Activated CD4-positive, alpha-beta T cell treated with anti-CD3 and anti-CD28 coated beads for 36 hours (primary cell): ENCODE measurements at regions of chr9 and their contacts with region 1.

Region 1: GRCh38 chr9:115013998-115014397 is 83.6 kb upstream of the TNFSF8 start:
- DNase-seq: peak; percentile 89
- ATAC-seq: peak; percentile 89
- H3K4me3 Mint-ChIP-seq: no peak overlapping the region
- H3K27ac Mint-ChIP-seq: peak overlapping the region; percentile 58
- H3K4me1 Mint-ChIP-seq: peaks cover 46% of the 10 kb centered on the region
- H3K27me3 Mint-ChIP-seq: no peaks in the 10 kb centered on the region

Region 2: DNA sequence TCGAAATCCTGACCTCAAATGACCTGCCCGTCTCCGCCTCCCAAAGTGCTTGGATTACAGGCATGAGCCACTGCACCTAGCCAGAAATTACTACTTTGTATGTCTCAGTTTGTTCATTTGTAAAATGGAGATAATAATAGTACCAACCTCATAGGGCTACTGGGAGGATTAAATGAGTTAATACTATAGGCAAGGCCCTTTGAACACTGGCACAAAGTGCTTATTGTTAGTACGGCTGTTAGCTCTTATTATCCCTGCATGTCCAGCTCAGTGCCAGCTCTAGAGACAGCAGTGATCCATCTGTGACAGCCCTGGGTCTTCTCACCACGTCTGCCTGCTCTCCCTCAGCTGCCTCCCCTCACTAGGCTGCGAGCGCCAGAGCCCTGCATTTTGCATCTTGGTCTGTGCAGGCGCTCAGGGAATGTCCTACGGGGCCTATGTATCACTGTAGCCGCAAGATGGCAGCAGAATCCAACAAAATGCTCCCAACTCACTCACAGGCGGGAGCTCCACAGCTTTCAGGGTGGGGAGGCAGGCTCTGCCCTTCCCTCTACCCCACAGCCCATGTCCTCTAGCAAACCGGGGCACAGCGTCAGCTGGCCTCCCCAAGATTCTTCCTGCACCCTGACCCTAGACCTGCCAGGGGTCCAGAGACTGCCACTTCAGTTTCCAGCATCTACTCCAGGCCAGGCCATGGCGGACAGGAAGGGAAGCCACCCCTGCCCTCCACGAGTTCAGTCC is 608.5 kb before region 1 on chr9:
- CTCF ChIA-PET with region 1: interaction called, 3 read pairs
- POLR2A ChIA-PET with region 1: no interaction called
- intact Hi-C with region 1: loop called (anchors 1 to 5 kb)
- DNase-seq: peak; percentile 88
- ATAC-seq: peak; percentile 100
- H3K4me3 Mint-ChIP-seq: no peak overlapping the region
- H3K27ac Mint-ChIP-seq: no peak overlapping the region
- H3K4me1 Mint-ChIP-seq: peaks cover 6% of the 10 kb centered on the region
- H3K27me3 Mint-ChIP-seq: no peaks in the 10 kb centered on the region

Region 3: GRCh38 chr9:114662081-114662989 is 351.7 kb before region 1 on chr9:
- CTCF ChIA-PET with region 1: interaction called, 10 read pairs
- POLR2A ChIA-PET with region 1: no interaction called
- intact Hi-C with region 1: loop called in 1 of 2 experiments (anchors 1 kb)
- DNase-seq: peak; percentile 80
- ATAC-seq: peak; percentile 92
- H3K4me3 Mint-ChIP-seq: no peak overlapping the region
- H3K27ac Mint-ChIP-seq: no peak overlapping the region
- H3K4me1 Mint-ChIP-seq: peaks cover 9% of the 10 kb centered on the region
- H3K27me3 Mint-ChIP-seq: peaks cover 5% of the 10 kb centered on the region

Region 4: DNA sequence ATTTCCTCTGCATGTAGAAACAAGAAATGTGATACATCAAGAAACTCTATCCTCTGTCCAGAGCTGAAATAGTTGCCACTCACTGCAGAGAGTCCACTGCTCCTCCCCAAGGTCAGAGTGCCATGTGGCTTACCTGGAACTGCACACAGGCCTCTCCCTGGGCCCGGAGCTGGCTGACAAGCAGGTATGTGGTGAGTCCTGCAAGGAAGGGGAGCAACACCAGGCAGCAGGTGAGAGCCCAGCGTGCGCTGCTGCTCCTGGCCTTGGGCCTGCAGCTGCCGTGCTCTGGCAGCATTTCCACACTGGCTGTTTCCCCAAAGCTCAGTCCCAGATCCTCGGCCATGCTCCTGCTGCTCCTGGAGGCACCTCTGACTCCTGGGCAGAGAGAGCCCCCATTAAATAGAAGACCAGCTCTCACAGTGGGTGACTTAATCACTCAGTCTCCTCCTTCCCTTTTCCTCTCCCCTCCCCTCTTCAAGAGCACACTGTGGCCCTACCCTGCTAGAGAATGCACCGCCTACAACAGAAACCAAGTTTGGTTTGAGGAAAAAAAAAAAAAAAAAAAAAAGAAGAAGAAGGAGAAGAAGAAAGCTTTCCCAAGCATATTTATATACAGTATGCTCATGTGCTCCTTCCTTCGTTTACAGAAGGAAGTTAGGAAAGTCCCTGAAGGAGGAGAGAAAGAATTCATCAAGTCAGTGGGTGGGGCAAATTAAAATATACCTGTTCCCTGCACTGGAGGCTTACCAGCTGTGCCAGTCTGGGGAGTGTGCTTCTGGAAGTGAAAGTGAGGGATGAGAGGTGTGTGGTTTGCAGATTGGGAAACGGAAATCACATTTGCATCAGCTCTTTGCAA is 208.1 kb before region 1 on chr9 and contains the start of gene TNFSF15:
- CTCF ChIA-PET with region 1: interaction called, 3 read pairs
- POLR2A ChIA-PET with region 1: no interaction called
- intact Hi-C with region 1: loop called in 1 of 2 experiments (anchors 5 kb)
- DNase-seq: peak; percentile 64
- ATAC-seq: peak; percentile 85
- H3K4me3 Mint-ChIP-seq: peak within 1 kb of the TSS; percentile 43
- H3K27ac Mint-ChIP-seq: peak within 1 kb of the TSS; percentile 68
- H3K4me1 Mint-ChIP-seq: peaks cover 25% of the 10 kb centered on the region
- H3K27me3 Mint-ChIP-seq: peaks cover 3% of the 10 kb centered on the region
- total RNA-seq, gene TNFSF15: 0.47 to 0.50 TPM

Region 5: GRCh38 chr9:114914139-114914538 is 99.9 kb before region 1 on chr9:
- CTCF ChIA-PET with region 1: interaction called, 34 read pairs
- POLR2A ChIA-PET with region 1: interaction called, 3 read pairs
- intact Hi-C with region 1: loop called (anchors 1 to 2 kb)
- DNase-seq: no peak
- ATAC-seq: no peak
- H3K4me3 Mint-ChIP-seq: no peak overlapping the region
- H3K27ac Mint-ChIP-seq: peak overlapping the region; percentile 39
- H3K4me1 Mint-ChIP-seq: peaks cover 75% of the 10 kb centered on the region
- H3K27me3 Mint-ChIP-seq: no peaks in the 10 kb centered on the region

Region 6: DNA sequence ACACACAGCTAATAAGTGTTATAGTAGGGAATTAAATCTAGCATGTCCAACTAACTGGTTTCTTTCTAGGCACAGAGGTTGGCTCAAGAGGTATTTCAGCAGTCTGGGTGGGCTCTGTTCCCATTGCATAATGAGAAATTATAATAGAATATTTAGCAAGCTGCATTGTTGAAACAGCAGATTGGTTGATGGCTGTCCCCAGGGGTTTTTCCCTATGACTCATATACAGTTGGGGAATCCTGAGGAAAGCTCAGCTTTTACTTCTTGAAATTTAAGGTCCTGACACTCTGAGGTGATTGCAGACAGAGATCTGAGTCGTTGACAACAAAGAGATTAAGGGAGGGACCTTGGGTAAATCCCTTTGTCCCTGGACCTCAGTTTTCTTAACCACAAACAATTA is 45.3 kb before region 1 on chr9:
- CTCF ChIA-PET with region 1: interaction called, 13 read pairs
- POLR2A ChIA-PET with region 1: no interaction called
- intact Hi-C with region 1: no loop called
- DNase-seq: no peak
- ATAC-seq: peak; percentile 90
- H3K4me3 Mint-ChIP-seq: no peak overlapping the region
- H3K27ac Mint-ChIP-seq: no peak overlapping the region
- H3K4me1 Mint-ChIP-seq: peaks cover 28% of the 10 kb centered on the region
- H3K27me3 Mint-ChIP-seq: no peaks in the 10 kb centered on the region

Region 7: GRCh38 chr9:115524453-115525059 is 510.6 kb after region 1 on chr9:
- CTCF ChIA-PET with region 1: no interaction called
- POLR2A ChIA-PET with region 1: no interaction called
- intact Hi-C with region 1: loop called (anchors 1 to 10 kb)
- DNase-seq: peak; percentile 16
- ATAC-seq: no peak
- H3K4me3 Mint-ChIP-seq: no peak overlapping the region
- H3K27ac Mint-ChIP-seq: no peak overlapping the region
- H3K4me1 Mint-ChIP-seq: no peaks in the 10 kb centered on the region
- H3K27me3 Mint-ChIP-seq: peaks cover 28% of the 10 kb centered on the region